Activated B cell treated with CpG ODN at 0.5 μM for 24 hours (primary cell): ENCODE measurements at regions of chr10 and their contacts with region 1.

Region 1: DNA sequence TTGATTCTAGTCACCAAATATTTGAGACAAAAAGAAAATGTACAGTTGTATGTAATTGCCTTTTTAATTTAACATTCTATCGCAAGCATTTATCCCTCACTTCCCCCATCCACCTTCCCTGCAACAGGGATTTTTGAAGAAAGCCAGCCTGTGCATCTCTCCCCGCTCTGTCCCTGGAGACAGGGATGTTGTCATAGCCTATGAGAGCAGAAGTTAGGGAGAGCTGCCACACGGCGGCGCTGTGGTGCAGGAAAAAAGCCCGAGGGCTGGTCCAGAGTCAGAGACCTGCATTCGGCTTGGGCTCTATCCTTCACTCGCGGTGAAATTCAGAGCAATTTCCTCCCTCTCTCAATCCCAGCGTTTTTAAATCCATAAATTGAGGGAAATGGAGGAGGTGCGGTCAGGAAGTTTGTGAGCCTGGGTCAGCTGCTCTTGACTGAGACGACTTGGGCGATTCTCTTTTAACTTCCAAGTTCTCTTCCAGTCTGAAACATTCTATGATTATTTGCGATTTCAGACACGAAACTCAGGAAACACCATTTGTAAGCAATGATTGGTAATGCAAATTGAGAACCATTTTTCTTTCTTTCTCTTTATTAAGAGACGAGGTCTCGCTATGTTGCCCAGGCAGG is 17.5 kb downstream of the HKDC1 start:
- DNase-seq: peak; percentile 79
- ATAC-seq: peak; percentile 98
- H3K4me3 Mint-ChIP-seq: no peak overlapping the region
- H3K27ac Mint-ChIP-seq: no peak overlapping the region
- H3K4me1 Mint-ChIP-seq: peaks cover 3% of the 10 kb centered on the region
- H3K27me3 Mint-ChIP-seq: no peaks in the 10 kb centered on the region
- CTCF ChIP-seq: peak; percentile 67

Region 2: DNA sequence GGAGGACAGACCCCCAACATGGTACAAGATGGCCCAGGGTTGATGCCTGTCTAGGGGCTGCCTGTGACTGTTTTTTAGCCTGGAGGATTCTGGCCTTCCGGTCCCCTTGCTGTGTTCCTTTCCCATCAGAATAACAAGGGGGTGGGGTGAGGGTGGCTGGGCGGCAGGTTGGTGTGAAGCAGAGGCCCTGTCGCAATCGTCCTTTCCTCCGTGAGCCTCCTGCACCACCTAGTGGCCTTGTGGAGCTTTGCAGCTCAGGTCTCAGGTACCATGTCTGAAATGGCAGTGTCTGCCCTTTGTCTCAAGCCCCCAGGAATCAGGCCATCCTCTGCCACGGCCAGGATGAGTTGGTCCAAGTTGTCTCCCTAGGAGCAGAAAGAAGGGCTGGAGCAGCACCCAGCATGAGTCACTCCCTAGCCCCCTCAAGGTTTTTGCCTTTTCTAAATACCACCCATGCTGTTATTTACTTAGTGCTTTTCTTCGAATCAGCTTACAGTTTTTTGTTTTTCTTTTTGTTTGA is 154.9 kb after region 1 on chr10:
- CTCF ChIA-PET with region 1: interaction called, 127 read pairs
- POLR2A ChIA-PET with region 1: no interaction called
- intact Hi-C with region 1: loop called (anchors 1 kb)
- DNase-seq: peak; percentile 62
- ATAC-seq: peak; percentile 99
- H3K4me3 Mint-ChIP-seq: no peak overlapping the region
- H3K27ac Mint-ChIP-seq: no peak overlapping the region
- H3K4me1 Mint-ChIP-seq: peaks cover 16% of the 10 kb centered on the region
- H3K27me3 Mint-ChIP-seq: no peaks in the 10 kb centered on the region
- CTCF ChIP-seq: peak; percentile 94